Activated B cell treated with CpG ODN at 0.5 μM for 24 hours (primary cell): ENCODE measurements at regions of chr13 and their contacts with region 1.

Region 1: GRCh38 chr13:99133230-99133629 is 67.4 kb upstream of the UBAC2 start:
- DNase-seq: no peak
- ATAC-seq: no peak
- H3K4me3 Mint-ChIP-seq: no peak overlapping the region
- H3K27ac Mint-ChIP-seq: no peak overlapping the region
- H3K4me1 Mint-ChIP-seq: no peaks in the 10 kb centered on the region
- H3K27me3 Mint-ChIP-seq: no peaks in the 10 kb centered on the region
- CTCF ChIP-seq: no peak

Region 2: DNA sequence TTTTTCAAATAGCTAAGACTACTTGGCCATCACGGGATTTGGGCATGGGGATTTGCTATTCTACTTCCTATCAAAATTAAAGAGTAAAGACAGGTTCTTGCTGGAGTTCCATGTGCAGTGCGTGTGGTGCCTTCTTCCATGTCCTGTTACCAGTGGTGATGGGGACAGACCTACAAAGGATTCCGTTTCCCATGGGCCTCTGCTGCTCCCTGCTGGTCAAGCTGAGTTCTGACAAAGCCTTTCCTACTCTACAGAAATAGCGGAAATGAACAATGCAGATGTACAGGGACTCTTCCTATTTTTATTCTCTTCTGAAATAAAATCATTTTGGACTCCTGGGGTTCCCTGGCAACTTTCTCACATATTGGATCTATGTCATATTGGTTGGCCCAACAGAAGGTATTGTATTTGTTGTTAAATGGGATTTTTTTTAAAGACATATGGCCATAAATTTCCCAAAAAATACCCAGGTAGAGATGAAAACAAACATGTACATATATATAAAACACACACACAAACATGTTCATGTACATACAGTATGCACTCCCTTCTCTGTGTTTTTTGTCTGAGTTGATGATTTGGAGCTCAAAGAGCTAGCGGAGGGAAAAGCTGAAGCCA is 290.3 kb before region 1 on chr13:
- CTCF ChIA-PET with region 1: no interaction called
- POLR2A ChIA-PET with region 1: no interaction called
- intact Hi-C with region 1: loop called (anchors 10 kb)
- DNase-seq: peak; percentile 34
- ATAC-seq: peak; percentile 86
- H3K4me3 Mint-ChIP-seq: no peak overlapping the region
- H3K27ac Mint-ChIP-seq: no peak overlapping the region
- H3K4me1 Mint-ChIP-seq: no peaks in the 10 kb centered on the region
- H3K27me3 Mint-ChIP-seq: no peaks in the 10 kb centered on the region
- CTCF ChIP-seq: peak; percentile 37

Region 3: GRCh38 chr13:99062593-99062992 is 70.6 kb before region 1 on chr13:
- CTCF ChIA-PET with region 1: no interaction called
- POLR2A ChIA-PET with region 1: no interaction called
- intact Hi-C with region 1: no loop called
- DNase-seq: no peak
- ATAC-seq: no peak
- H3K4me3 Mint-ChIP-seq: no peak overlapping the region
- H3K27ac Mint-ChIP-seq: no peak overlapping the region
- H3K4me1 Mint-ChIP-seq: peaks cover 34% of the 10 kb centered on the region
- H3K27me3 Mint-ChIP-seq: peaks cover 2% of the 10 kb centered on the region
- CTCF ChIP-seq: no peak